GM12878 (cell line): ENCODE measurements at regions of chr6 and their contacts with region 1.

Region 1: GRCh38 chr6:32570363-32570905 is 19.2 kb downstream of the HLA-DRB1 start:
- DNase-seq: no peak
- ATAC-seq: no peak
- H3K4me3 ChIP-seq: no peak overlapping the region
- H3K27ac ChIP-seq: no peak overlapping the region
- H3K4me1 ChIP-seq: no peaks in the 10 kb centered on the region
- H3K27me3 ChIP-seq: no peaks in the 10 kb centered on the region
- CTCF ChIP-seq: no peak
- EP300 ChIP-seq: no peak
- POLR2A ChIP-seq: no peak
- RAD21 ChIP-seq: no peak

Region 2: GRCh38 chr6:32203426-32204247 is 366.8 kb before region 1 on chr6:
- CTCF ChIA-PET with region 1: no interaction called
- POLR2A ChIA-PET with region 1: no interaction called
- RAD21 ChIA-PET with region 1: no interaction called
- SMC1A ChIA-PET with region 1: no interaction called
- in situ Hi-C with region 1: no loop called
- intact Hi-C with region 1: no loop called
- DNase-seq: no peak
- ATAC-seq: no peak
- H3K4me3 ChIP-seq: no peak overlapping the region
- H3K27ac ChIP-seq: no peak overlapping the region
- H3K4me1 ChIP-seq: no peaks in the 10 kb centered on the region
- H3K27me3 ChIP-seq: no peaks in the 10 kb centered on the region
- CTCF ChIP-seq: no peak
- EP300 ChIP-seq: no peak
- POLR2A ChIP-seq: no peak
- RAD21 ChIP-seq: no peak

Region 3: DNA sequence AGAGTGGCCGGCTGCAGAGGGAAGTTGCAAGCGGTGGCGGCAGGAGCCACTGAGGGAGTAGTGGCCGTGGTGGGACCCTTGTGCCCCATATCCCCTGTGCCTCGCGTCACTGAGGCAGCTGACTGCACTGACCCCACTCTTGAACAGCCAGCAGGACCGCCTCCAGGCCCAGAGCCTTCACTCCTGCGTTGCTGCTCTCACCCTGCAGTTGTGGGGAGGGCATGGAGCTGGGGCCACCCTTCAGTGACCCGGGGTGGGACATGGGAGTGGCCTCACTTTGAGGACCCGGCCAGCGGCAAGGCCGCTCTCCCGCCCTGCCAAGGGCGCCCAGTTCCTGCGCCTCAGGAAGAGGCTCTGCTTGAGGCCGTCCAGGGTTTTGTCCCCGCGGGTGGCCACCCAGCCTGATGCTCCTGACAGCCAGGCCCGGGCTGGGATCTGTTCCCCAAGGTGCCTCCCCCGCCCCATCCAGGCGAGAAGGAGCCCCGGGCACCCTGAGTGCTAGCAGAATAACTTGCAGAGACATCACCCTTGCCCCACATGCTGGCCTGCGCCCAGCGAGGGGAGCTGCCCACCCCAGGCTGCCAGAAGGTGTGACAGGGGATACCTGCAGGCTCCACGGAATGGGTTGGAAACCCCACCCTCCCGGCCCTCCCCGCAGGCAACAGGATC is 86.3 kb before region 1 on chr6:
- CTCF ChIA-PET with region 1: interaction called, 4 read pairs
- POLR2A ChIA-PET with region 1: interaction called, 15 read pairs
- RAD21 ChIA-PET with region 1: interaction called, 12 read pairs
- SMC1A ChIA-PET with region 1: interaction called, 12 read pairs
- in situ Hi-C with region 1: no loop called
- intact Hi-C with region 1: no loop called
- DNase-seq: no peak
- ATAC-seq: no peak; the same call in 2 of the 3 replicates
- H3K4me3 ChIP-seq: no peak overlapping the region
- H3K27ac ChIP-seq: no peak overlapping the region
- H3K4me1 ChIP-seq: no peaks in the 10 kb centered on the region
- H3K27me3 ChIP-seq: no peaks in the 10 kb centered on the region
- CTCF ChIP-seq: no peak
- EP300 ChIP-seq: no peak
- POLR2A ChIP-seq: no peak
- RAD21 ChIP-seq: no peak

Region 4: DNA sequence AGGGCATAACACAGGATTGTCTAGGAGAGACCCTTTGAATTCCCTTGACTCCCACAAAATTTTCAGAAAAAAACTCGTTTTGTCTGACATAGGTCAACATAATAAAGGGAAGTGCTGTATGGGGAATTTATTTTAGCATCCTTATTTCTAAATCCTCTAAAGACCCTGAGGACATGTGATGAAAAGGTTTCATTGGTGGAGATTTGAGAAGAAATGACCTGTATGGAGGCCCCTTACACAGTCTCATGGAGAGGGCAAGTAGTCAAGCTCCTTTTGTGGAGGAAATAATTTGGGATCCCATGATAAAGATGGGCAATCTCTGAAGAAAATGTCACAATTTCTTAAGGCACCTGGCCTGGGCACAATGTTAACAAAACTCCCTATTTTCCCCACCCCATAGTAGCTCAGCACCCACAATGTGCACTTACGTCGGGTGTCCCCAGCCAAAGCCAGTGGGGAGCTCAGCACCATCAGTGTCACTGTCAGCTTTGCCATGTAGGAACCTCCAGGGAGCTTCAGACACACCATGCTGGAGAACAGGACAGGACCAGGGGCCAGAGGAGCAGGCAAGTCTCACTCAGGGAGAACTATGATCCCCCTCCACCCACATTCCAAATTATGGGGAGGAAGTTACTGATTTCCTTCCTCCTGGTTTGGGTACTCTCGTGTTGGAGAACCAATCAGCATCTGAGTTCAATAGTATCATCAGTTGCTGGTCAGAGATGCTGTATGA is 40.6 kb before region 1 on chr6 and contains the start of gene HLA-DRB5:
- CTCF ChIA-PET with region 1: no interaction called
- POLR2A ChIA-PET with region 1: interaction called, 11 read pairs
- RAD21 ChIA-PET with region 1: no interaction called
- SMC1A ChIA-PET with region 1: no interaction called
- in situ Hi-C with region 1: no loop called
- intact Hi-C with region 1: loop called (anchors 2 kb)
- DNase-seq: peak; percentile 58
- ATAC-seq: peak; percentile 90
- H3K4me3 ChIP-seq: peak within 1 kb of the TSS; percentile 58; the same call in 1 of the 2 replicates
- H3K27ac ChIP-seq: peak within 1 kb of the TSS; percentile 92
- H3K4me1 ChIP-seq: no peaks in the 10 kb centered on the region
- H3K27me3 ChIP-seq: no peaks in the 10 kb centered on the region
- CTCF ChIP-seq: no peak
- EP300 ChIP-seq: no peak
- POLR2A ChIP-seq: peak; percentile 73
- RAD21 ChIP-seq: no peak
- polyA plus RNA-seq, gene HLA-DRB5: 38.5 to 40.6 TPM

Region 5: DNA sequence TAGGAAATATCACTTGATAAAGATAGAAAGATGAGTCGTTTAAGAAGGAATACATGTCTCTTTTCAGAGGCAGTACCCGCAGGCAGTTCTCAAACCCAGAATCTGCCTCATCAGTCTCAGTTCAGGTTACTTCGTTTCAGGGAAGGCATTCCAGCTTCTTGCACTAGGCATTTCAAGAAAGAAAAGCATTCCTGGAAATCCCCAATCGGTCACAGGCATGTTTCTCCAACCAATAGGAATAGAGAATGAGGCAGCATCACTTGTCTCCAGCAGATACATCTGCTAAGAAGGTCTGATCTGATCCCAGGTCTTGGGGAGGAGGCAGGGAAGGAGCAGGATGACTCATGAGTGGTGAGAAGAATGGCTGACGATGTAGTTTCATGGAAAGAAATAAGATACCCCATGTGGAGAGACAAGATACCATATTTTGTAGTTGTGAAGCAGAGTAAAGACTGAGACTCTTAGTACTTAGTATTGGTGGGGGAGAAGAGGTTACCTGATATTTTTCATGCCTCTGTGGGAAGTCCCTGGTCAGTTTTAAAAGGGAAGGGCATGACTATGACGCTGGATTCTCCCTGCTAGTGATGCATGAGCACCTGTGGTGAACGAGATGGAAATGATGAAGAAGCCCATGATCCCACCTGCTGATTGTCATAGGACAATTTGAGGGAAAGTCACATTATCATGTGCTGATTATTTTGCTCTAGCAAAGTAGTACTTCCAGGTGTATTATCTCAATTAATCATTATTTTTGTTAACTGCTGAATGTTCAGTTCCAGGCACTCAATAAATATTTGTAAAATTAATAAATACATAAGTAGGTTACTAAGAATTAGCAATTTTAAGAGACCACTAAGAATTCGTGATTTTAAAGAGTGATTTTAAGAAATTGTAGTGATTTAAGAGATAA is 39.6 kb after region 1 on chr6:
- CTCF ChIA-PET with region 1: no interaction called
- POLR2A ChIA-PET with region 1: no interaction called
- RAD21 ChIA-PET with region 1: no interaction called
- SMC1A ChIA-PET with region 1: no interaction called
- in situ Hi-C with region 1: no loop called
- intact Hi-C with region 1: no loop called
- DNase-seq: peak; percentile 100
- ATAC-seq: peak; percentile 84
- H3K4me3 ChIP-seq: peak overlapping the region; percentile 3; the same call in 1 of the 2 replicates
- H3K27ac ChIP-seq: peak overlapping the region; percentile 95
- H3K4me1 ChIP-seq: peaks cover 17% of the 10 kb centered on the region
- H3K27me3 ChIP-seq: no peaks in the 10 kb centered on the region
- CTCF ChIP-seq: no peak
- EP300 ChIP-seq: peak; percentile 30 to 68; a peak in 2 of 4 replicates
- POLR2A ChIP-seq: peak; percentile 59; the same call in 1 of the 2 replicates
- RAD21 ChIP-seq: no peak